CD4-positive, alpha-beta T cell (primary cell): ENCODE measurements at regions of chr13 and their contacts with region 1.

Region 1: DNA sequence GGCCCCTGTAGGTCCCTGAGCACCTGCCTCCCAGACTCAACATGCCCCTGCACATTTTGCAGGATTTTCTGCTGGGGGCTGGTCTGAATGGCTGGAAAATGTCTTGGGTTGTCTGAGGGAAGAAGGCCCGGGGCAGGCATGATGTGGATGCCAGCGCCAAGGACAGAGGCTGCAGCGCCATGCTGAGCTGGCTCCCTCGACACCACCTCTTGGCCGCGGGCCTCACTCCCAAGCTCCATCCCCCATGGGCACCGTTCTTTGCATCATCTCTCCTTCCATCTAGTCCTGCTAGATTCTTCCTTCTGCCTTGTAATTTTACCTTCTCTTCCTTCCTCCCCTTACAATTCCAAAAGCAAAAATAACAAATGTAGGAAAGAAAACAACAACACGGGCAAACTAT is 70.6 kb downstream of the ZIC5 start:
- DNase-seq: no peak
- ATAC-seq: no peak
- H3K4me3 ChIP-seq: no peak overlapping the region
- H3K4me3 Mint-ChIP-seq: no peak overlapping the region
- H3K27ac ChIP-seq: no peak overlapping the region
- H3K27ac Mint-ChIP-seq: no peak overlapping the region
- H3K4me1 ChIP-seq: peaks cover 11% of the 10 kb centered on the region
- H3K4me1 Mint-ChIP-seq: no peaks in the 10 kb centered on the region
- H3K27me3 ChIP-seq: peaks cover 26 to 41% of the 10 kb centered on the region in 2 experiments
- H3K27me3 Mint-ChIP-seq: peaks cover 72% of the 10 kb centered on the region
- CTCF ChIP-seq: no peak

Region 2: GRCh38 chr13:99165753-99166587 is 735.0 kb before region 1 on chr13:
- CTCF ChIA-PET with region 1: no interaction called
- POLR2A ChIA-PET with region 1: no interaction called
- intact Hi-C with region 1: no loop called
- DNase-seq: no peak
- ATAC-seq: no peak
- H3K4me3 ChIP-seq: no peak overlapping the region
- H3K4me3 Mint-ChIP-seq: no peak overlapping the region
- H3K27ac ChIP-seq: no peak overlapping the region
- H3K27ac Mint-ChIP-seq: no peak overlapping the region
- H3K4me1 ChIP-seq: no peaks in the 10 kb centered on the region
- H3K4me1 Mint-ChIP-seq: no peaks in the 10 kb centered on the region
- H3K27me3 ChIP-seq: peaks cover 0 to 2% of the 10 kb centered on the region in 2 experiments
- H3K27me3 Mint-ChIP-seq: no peaks in the 10 kb centered on the region
- CTCF ChIP-seq: no peak

Region 3: DNA sequence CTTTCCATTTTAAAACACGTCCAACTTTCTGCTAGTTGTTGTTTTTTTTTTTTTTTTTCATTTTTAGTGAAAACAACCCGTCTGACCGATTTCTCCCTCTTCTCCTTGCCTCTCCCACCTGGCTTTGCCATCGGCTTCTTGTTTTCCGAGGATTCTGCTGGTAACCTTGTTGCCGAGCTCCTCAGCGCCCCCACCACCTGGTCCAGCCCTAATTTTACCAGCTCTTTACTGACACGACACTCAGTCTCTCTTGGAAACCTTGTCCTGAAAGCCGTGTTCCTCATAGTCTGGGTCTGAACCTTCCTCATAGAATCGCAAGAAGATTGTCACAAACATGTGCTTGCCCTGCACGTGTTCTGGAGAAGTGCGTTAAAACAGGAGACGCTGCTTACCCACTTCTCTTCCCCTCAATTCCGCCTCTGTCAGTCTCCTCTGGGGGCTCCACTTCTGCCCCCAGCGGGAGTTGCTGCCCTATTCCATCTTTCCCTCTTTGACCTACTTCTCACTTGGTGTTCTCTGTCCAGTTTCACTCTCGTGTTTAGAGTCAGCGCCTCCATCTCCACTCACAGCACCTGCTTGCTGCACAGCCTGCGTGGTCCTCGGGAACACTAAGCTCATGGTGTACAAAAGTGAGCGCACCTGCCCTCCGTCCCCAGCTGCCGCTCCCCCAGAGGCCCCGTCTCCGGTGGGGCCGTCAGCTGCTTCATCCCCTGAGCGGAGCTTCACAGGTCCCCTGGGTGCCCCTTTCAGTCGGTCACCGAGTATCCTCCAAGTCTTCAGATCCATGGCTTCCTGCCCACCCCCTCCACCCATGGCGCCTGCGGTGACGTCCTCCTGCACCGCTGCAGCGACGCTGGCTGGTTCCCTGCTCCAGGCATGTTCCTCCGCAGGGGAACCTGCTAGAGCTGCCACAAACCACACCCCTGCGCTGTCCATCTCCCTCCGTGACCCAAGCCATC is 334.6 kb before region 1 on chr13:
- CTCF ChIA-PET with region 1: no interaction called
- POLR2A ChIA-PET with region 1: no interaction called
- intact Hi-C with region 1: no loop called
- DNase-seq: no peak
- ATAC-seq: no peak
- H3K4me3 ChIP-seq: peak overlapping the region; percentile 35
- H3K4me3 Mint-ChIP-seq: peak overlapping the region; percentile 47
- H3K27ac ChIP-seq: no peak overlapping the region
- H3K27ac Mint-ChIP-seq: no peak overlapping the region
- H3K4me1 ChIP-seq: peaks cover 6% of the 10 kb centered on the region
- H3K4me1 Mint-ChIP-seq: peaks cover 5% of the 10 kb centered on the region
- H3K27me3 ChIP-seq: no peaks in the 10 kb centered on the region
- H3K27me3 Mint-ChIP-seq: no peaks in the 10 kb centered on the region
- CTCF ChIP-seq: no peak

Region 4: GRCh38 chr13:99886706-99887105 is 14.3 kb before region 1 on chr13:
- CTCF ChIA-PET with region 1: no interaction called
- POLR2A ChIA-PET with region 1: no interaction called
- intact Hi-C with region 1: no loop called
- DNase-seq: no peak
- ATAC-seq: no peak
- H3K4me3 ChIP-seq: no peak overlapping the region
- H3K4me3 Mint-ChIP-seq: no peak overlapping the region
- H3K27ac ChIP-seq: no peak overlapping the region
- H3K27ac Mint-ChIP-seq: no peak overlapping the region
- H3K4me1 ChIP-seq: no peaks in the 10 kb centered on the region
- H3K4me1 Mint-ChIP-seq: no peaks in the 10 kb centered on the region
- H3K27me3 ChIP-seq: no peaks in the 10 kb centered on the region
- H3K27me3 Mint-ChIP-seq: no peaks in the 10 kb centered on the region
- CTCF ChIP-seq: no peak

Region 5: DNA sequence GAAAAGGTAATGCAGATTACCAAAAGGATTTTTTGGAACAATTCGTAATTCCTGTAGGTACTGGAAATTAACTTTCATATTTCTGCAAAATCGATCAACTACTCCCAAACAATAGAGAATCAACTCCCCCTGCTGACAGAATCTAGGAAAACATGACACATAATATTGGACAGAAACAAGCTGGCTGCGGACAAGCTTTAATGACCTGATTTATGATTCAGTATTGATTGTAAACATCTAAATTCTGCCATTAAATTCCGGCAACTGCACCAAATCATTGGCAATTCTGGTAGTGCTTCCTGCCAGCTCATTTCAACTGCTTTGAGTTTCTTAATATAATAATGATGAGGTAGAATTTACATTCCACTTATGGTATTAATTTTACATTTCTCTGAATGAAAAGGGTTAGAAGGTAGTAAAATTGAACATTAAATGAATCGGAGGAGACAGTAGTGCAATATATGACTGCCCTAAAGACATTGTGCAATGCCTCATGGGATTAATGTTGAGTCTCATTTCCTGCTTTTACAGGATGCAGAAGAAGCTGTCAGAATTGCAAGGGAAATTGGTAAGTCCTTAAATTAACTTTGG is 334.4 kb after region 1 on chr13:
- CTCF ChIA-PET with region 1: no interaction called
- POLR2A ChIA-PET with region 1: no interaction called
- intact Hi-C with region 1: loop called in 1 of 2 experiments (anchors 5 kb)
- DNase-seq: peak in 4 of 14 experiments; percentile 27 to 67 (median 65)
- ATAC-seq: no peak
- H3K4me3 ChIP-seq: no peak overlapping the region
- H3K4me3 Mint-ChIP-seq: no peak overlapping the region
- H3K27ac ChIP-seq: no peak overlapping the region
- H3K27ac Mint-ChIP-seq: no peak overlapping the region
- H3K4me1 ChIP-seq: peaks cover 4% of the 10 kb centered on the region
- H3K4me1 Mint-ChIP-seq: no peaks in the 10 kb centered on the region
- H3K27me3 ChIP-seq: no peaks in the 10 kb centered on the region
- H3K27me3 Mint-ChIP-seq: no peaks in the 10 kb centered on the region
- CTCF ChIP-seq: peak; percentile 85

Region 6: DNA sequence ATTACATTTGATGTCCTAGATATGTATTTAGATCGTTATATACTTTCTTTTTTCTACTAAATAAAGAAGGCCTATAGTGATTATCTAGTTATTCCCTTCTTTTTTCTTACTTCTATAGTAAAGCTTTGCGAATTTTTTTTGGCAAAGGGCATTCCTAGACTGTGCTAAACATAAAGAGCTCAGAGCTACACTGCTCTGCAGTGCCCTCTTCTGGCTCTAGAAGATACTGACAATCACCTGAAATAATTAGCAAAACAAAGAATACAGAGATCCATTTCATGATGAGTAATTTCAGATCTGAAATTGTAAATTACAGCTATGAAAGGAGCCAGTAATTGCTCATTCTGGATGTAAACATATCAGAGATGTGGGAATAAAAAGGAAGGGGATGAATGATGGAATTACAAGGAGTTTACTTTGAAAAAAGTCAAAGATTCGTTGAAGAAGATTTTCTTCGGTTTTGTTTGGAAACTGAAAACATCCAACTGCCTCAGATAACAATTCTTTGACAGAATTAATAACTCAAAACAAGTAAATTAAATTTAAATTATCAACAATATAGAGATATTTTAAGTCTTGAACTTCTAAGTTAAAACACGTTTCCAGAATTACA is 1226.9 kb after region 1 on chr13:
- CTCF ChIA-PET with region 1: no interaction called
- POLR2A ChIA-PET with region 1: no interaction called
- intact Hi-C with region 1: loop called in 1 of 2 experiments (anchors 5 kb)
- DNase-seq: peak in 5 of 14 experiments; percentile 1 to 57 (median 34)
- ATAC-seq: peak; percentile 73
- H3K4me3 ChIP-seq: no peak overlapping the region
- H3K4me3 Mint-ChIP-seq: no peak overlapping the region
- H3K27ac ChIP-seq: no peak overlapping the region
- H3K27ac Mint-ChIP-seq: no peak overlapping the region
- H3K4me1 ChIP-seq: no peaks in the 10 kb centered on the region
- H3K4me1 Mint-ChIP-seq: no peaks in the 10 kb centered on the region
- H3K27me3 ChIP-seq: no peaks in the 10 kb centered on the region
- H3K27me3 Mint-ChIP-seq: peaks cover 11% of the 10 kb centered on the region
- CTCF ChIP-seq: peak; percentile 72